Astrocyte of the cerebellum (primary cell): ENCODE measurements at regions of chr16 and their contacts with region 1.

Region 1: DNA sequence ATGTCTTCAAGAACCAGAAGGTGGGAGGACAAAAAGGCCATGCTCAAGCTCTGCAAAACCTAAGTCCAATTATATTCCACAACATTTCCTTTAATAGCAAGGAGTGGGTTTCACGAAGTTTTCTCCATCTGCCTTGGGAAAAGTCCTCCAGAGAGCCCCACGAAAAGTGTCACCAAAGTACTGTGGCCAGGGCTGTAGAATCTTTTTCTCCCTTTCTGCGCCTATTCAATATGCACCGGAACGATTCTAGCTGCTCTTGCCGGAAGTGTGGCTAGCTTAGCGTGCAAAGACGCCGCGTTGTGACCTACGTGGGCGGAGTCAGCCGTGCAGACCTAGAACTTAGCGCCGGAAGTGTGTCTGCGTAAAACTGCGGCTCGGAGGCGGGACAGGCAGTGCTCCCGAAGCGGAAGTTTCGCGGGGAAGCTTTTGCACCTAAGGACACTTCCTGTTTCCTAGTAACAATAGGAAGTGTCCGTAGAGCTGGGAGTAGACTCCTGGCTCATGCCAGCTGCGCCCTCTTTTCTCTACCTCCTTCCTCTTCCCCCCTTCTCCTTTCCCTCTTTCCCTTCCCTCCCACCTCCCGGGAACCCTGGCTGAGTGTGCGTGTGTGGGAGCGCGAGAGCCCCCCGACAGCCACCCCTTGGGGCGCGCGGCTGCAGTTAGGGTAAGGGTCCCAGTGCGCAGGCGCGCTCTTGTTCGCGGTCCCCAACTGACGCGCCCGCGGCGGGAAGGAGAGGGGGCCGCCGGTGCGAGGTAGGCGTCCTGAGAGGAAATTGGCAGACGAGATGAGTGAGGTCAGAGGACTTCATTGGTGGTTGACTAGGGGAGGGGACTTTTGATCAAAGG is at the starts of genes ZNF646 and ZNF668:
- DNase-seq: peak; percentile 99
- H3K4me3 ChIP-seq: peak within 1 kb of the TSS; percentile 85
- CTCF ChIP-seq: no peak

Region 2: DNA sequence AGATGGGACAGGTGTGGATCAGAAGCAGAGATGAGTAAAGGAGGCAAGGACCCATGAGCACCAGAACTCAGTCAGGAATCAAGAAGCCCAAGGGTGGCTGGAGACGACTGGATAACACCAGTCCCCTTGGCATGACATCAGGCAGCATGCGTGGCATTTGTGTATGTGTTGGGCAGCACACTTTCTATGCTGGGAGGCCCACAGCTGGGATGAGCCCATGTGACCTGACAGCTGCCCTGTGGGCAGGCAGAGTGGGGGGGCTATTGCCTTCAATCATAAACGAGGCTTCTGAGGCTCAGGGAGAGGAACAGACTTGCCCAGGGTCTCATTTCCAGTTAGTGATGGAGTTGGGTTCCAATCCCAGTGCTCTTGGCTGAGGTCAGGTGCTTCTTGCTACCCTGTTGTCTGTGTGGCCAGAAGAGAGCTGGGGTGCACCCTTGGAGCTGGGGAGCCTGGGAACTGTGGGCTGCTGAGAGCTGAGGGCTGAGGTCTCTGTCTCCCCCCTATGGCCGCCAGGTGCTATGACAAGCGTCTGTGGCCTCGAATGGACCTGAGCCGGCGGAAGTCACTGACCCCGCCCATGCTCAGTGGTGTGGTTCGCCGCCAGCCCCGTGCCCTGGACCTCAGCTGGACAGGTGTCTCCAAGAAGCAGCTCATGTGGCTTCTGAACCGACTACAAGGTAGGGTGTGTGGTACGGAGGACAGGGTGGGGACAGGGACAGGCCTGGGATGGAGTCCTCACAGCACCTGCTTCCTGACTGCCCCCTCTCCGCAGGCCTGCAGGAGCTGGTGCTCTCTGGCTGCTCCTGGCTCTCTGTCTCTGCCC is 132.4 kb before region 1 on chr16:
- in situ Hi-C with region 1: loop called (anchors 25 kb)
- DNase-seq: no peak
- H3K4me3 ChIP-seq: no peak overlapping the region
- CTCF ChIP-seq: peak; percentile 97

Region 3: GRCh38 chr16:31134625-31135547 is 60.7 kb after region 1 on chr16:
- in situ Hi-C with region 1: no loop called
- DNase-seq: no peak
- H3K4me3 ChIP-seq: no peak overlapping the region
- CTCF ChIP-seq: no peak

Region 4: GRCh38 chr16:31148281-31148771 is 74.1 kb after region 1 on chr16:
- in situ Hi-C with region 1: no loop called
- DNase-seq: no peak
- H3K4me3 ChIP-seq: no peak overlapping the region
- CTCF ChIP-seq: no peak